ENCODE measurements at regions of chr3 and their contacts with region 1.

Region 1: DNA sequence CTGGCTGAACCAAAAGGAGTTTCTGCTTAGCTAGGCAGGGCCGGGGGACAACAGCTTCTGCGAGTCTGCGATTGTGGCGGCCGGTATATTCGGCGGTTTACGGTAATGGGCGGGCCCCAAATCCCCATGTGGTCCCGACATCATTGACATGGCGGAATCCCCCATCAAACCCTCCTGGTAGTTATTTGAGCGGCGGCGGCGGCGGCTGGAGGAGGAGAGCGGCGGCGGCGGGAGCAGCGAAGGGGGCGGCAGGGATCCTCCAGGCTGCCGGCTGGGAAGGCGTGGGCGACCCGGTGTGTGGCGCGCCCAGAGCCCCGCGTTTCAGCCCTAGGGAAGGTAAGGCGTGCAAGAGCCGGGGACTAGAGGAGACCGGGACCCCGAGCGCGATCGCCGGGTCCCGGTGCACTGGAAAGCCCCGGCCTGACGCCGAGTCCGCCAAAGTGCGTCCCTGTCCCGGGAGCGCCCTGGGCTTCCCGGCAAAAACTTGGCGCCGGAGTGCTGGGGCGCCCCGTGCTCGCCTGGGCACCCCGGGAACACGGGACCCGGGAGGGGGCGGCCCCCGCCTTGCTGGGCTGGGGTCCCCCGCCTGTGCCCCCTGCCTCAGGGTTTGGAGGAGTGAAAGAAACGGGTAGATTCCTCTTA is at the start of gene FNDC3B:
- DNase-seq: peak; percentile 72
- ATAC-seq: peak; percentile 82
- H3K4me3 ChIP-seq: peak within 1 kb of the TSS; percentile 90 to 91
- H3K27ac ChIP-seq: peak within 1 kb of the TSS; percentile 88
- H3K4me1 ChIP-seq: peaks cover 25% of the 10 kb centered on the region
- H3K27me3 ChIP-seq: no peaks in the 10 kb centered on the region
- CTCF ChIP-seq: no peak
- total RNA-seq, gene FNDC3B: 173 TPM

Region 2: DNA sequence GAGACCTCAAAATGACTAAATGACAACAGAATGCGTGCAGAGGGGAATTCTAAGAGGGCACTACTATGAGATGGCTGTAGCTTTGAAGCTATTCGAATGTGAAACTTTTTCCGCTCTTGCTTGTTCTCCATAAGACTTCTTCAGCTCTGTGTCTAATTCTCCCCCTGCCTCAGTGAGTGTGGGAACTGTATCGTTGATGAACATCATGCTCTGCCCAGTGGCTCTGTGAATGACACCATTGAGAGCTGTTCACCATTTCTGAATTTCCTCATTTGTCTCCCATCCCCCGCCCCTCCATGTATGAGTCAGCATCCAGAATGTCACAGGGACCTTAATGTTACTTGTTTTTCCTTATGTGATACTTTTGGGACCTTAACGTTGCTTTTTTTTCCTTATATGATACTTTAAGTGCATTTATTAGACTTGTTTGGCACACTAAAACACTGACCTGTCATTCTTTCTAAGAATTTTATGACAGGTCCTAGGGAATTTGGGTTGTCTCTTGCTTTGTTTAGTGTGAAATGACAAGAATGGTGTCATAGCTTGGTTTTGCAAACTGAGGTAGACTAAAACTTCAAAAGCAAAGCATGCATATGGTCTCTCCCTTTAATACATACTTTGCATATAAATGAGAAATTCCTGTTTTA is 99.4 kb after region 1 on chr3:
- CTCF ChIA-PET with region 1: no interaction called
- POLR2A ChIA-PET with region 1: interaction called, 5 read pairs
- in situ Hi-C with region 1: no loop called
- intact Hi-C with region 1: loop called (anchors 5 kb)
- DNase-seq: no peak
- ATAC-seq: no peak
- H3K4me3 ChIP-seq: no peak overlapping the region
- H3K27ac ChIP-seq: peak overlapping the region; percentile 97
- H3K4me1 ChIP-seq: peaks cover 94% of the 10 kb centered on the region
- H3K27me3 ChIP-seq: no peaks in the 10 kb centered on the region
- CTCF ChIP-seq: no peak

Measured in Panc1 (cell line).